Activated CD8-positive, alpha-beta memory T cell treated with anti-CD3 and anti-CD28 coated beads, Interleukin-2, amount 10 ng/mL, durations not matched to agents 7 days and 5 days (primary cell): ENCODE measurements at regions of chr7 and their contacts with region 1.

Region 1: GRCh38 chr7:29189743-29190201 is 4.8 kb upstream of the CHN2 start:
- DNase-seq: peak; percentile 69
- ATAC-seq: peak; percentile 74
- H3K4me3 Mint-ChIP-seq: no peak overlapping the region
- H3K27ac Mint-ChIP-seq: no peak overlapping the region
- H3K4me1 Mint-ChIP-seq: no peaks in the 10 kb centered on the region
- H3K27me3 Mint-ChIP-seq: peaks cover 47% of the 10 kb centered on the region

Region 2: DNA sequence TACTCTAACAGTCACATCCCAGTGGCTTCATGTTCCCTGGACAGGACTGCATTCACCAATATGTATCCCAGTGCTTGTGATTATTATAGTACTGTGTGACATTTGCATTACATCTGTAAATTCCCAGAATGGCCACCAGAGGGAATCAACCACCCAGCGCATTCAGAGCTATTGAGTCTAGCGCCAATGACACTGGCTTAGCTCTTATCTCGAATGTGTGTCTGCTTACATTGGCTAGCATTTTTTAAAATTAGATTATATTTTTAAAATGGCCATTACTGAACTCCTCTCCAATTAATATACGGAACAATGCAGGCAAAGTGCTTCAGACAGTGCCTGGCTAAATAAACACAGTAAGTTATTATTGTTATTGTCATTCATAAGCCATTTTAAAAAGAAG is 267.9 kb before region 1 on chr7:
- CTCF ChIA-PET with region 1: interaction called, 12 read pairs
- DNase-seq: peak; percentile 51
- ATAC-seq: peak; percentile 82
- H3K4me3 Mint-ChIP-seq: no peak overlapping the region
- H3K27ac Mint-ChIP-seq: no peak overlapping the region
- H3K4me1 Mint-ChIP-seq: peaks cover 14% of the 10 kb centered on the region
- H3K27me3 Mint-ChIP-seq: peaks cover 17% of the 10 kb centered on the region

Region 3: DNA sequence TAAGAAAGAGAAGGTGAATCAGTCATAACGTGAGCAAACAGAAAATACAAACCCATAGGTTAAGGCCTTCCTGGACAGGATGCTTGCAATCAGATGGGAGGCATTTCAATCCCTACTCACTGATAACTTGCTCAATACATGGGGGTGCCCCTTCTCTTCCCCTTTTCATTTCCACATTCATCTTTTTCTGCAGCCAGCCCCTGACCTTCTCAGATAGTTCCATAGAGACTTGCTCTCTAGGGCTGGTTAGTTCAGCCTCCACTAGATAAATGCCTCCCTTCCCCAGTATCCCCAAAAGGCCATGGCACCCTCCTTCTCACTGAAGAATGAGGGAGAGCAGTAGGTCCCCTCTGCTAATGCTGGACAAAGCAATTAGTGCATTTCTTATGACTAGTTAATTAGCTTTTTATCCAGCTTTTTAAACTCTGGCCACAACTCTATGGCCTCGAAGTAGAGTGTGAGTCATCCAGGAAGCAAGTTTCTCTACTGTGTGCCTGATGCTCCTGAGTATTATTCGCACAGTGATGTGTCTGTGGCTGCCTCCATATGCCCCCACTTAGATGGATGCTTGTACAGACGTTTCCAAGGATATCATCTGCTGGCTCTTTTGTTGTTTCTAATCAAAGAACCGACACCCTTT is 17.5 kb after region 1 on chr7:
- CTCF ChIA-PET with region 1: interaction called, 19 read pairs
- DNase-seq: no peak
- ATAC-seq: peak; percentile 88
- H3K4me3 Mint-ChIP-seq: no peak overlapping the region
- H3K27ac Mint-ChIP-seq: no peak overlapping the region
- H3K4me1 Mint-ChIP-seq: peaks cover 26% of the 10 kb centered on the region
- H3K27me3 Mint-ChIP-seq: no peaks in the 10 kb centered on the region

Region 4: DNA sequence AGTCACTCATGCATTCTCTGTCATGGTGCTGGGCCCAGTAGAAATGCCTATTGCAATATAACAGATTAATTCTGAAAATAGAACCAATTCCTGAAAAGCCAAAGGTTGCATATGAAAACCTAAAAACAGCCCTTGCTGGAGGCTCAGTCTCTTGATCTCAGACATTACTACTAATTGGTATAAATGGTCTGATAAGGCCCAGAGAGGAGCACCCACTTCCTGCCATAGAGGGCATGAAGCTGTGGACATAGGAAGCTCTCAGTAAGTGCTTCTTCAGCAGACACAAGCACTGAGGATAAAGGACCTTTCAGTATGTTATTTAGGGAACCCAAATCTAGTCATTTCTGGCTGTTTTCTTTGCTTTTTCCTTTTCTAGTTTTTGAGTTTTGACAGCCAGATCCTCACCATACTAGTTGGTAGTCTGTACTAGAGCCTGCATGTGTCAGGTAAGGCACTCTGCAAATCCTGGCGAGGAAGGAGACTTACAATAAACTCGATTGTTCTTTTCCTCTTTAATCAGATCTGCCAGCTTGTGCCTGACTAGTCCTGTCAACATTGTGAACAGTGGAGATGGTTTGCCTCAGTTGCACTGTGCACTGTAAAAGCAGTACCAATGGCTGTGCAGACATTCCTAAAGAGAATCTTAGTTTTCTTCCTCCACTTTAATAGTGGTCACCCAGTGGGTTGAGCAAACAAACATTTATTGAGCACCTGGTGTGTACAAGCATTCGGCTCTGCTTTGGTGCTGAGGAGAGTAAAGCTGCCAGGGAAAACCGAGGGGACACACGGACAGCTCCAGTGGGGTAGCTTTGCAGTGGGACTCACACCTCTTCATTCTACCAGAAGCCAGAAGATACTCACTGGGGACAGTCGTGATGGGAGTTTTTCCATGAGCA is 145.7 kb after region 1 on chr7:
- CTCF ChIA-PET with region 1: interaction called, 11 read pairs
- DNase-seq: no peak
- ATAC-seq: no peak
- H3K4me3 Mint-ChIP-seq: no peak overlapping the region
- H3K27ac Mint-ChIP-seq: no peak overlapping the region
- H3K4me1 Mint-ChIP-seq: peaks cover 36% of the 10 kb centered on the region
- H3K27me3 Mint-ChIP-seq: no peaks in the 10 kb centered on the region

Region 5: GRCh38 chr7:29345600-29345999 is 155.8 kb after region 1 on chr7:
- CTCF ChIA-PET with region 1: interaction called, 25 read pairs
- DNase-seq: peak; percentile 52
- ATAC-seq: peak; percentile 27
- H3K4me3 Mint-ChIP-seq: no peak overlapping the region
- H3K27ac Mint-ChIP-seq: no peak overlapping the region
- H3K4me1 Mint-ChIP-seq: peaks cover 2% of the 10 kb centered on the region
- H3K27me3 Mint-ChIP-seq: no peaks in the 10 kb centered on the region